Breast epithelium (tissue), 4 donors: ENCODE measurements at regions of chr3 and their contacts with region 1.

Region 1: DNA sequence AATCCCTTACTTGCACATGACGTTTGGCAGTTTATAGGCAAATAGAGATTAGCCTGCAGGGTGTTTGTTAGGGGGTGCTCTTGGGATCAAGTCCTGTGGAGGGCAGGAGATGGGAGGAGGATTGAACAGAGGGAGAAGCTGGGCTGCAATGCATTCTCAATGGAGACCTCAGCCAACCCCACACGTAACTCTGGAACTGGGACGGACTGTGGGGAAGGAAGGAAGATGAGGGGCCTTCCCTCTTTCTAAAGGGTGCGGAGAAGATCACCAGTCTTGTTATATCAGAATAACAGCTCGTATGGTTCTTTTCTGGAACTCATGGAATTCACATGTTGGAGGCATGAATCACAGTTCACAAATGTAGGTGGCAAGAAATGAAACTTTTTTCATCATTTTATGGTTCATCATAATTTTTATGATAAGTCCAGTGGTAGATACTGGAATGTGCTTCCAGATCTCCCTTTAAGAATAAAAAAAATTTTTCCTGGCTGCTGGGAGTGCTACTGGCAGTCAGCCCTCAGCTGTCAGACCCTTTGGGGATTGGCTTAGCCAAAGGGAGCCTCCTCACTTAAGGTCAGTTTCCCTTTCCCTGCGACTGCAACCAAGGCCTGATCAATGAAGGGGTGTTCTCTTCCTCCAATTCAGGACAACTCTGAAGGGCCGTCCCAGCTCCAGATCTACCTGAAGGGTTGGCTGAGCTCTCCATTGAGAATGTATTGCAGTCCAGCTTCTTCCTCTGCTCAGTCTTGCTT is 20.5 kb upstream of the LYZL4 start:
- DNase-seq: no peak
- H3K4me3 ChIP-seq: no peak overlapping the region
- H3K27ac ChIP-seq: no peak overlapping the region
- H3K4me1 ChIP-seq: no peaks in the 10 kb centered on the region
- H3K27me3 ChIP-seq: peaks cover 0 to 3% of the 10 kb centered on the region in 2 donors
- CTCF ChIP-seq: no peak
- POLR2A ChIP-seq: no peak

Region 2: DNA sequence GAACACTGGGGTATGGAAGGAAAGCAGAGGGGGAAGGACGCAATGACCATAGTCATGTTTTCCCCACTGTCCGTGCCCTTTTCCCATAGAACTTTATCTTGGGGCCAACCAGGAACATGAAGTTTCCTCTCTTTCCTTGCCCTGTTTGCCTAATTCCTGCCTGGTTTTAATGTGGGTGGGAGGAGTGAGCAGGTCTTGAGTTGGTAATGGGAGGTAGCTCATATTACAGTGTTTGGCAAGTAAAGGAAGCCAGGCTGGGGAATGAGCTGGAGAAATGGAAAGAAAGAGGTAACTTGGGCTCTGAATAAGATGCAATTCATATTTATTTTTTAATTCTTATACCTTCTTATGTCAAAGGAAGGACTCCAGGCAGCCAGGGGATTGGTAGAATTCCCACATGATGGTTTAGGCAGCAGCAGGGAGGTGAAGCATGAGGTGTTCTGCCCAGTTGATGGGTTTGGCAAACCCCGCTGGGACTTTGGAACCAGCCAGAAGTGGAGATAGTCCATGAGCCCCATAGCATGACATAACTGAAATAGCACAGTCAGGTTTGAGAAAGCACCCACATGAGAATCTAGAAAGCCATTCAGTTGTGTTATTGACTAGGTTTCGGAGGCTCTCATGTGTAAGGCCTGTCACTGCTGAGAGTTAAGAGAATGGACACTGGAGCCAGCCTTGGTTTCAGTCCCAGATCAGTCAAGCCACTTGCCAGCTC is 225.0 kb before region 1 on chr3:
- intact Hi-C with region 1: no loop called
- DNase-seq: no peak
- H3K4me3 ChIP-seq: no peak overlapping the region
- H3K27ac ChIP-seq: no peak overlapping the region
- H3K4me1 ChIP-seq: no peaks in the 10 kb centered on the region
- H3K27me3 ChIP-seq: no peaks in the 10 kb centered on the region
- CTCF ChIP-seq: no peak
- POLR2A ChIP-seq: no peak

Region 3: DNA sequence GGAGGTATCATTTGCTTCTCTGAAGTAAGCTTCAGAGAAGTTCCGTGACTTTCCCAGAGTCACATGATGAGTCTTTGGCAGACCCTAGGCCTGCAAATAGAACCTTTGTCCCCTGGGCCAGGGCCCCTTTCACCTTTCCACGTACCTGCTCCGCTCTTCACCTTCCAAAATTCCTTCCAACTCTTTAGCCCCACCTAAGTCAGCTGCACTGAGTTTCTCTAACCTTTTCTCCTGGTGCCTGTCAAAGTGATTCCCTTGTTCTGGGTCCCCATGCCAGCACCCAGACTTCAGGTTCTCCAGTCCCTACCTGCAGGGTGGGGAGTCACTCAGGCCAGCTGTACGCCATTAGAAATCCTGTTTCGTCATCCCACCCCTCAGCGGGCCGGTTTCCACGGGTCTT is 33.3 kb before region 1 on chr3:
- intact Hi-C with region 1: loop called (anchors 1 kb)
- DNase-seq: no peak
- H3K4me3 ChIP-seq: no peak overlapping the region
- H3K27ac ChIP-seq: no peak overlapping the region
- H3K4me1 ChIP-seq: no peaks in the 10 kb centered on the region
- H3K27me3 ChIP-seq: no peaks in the 10 kb centered on the region
- CTCF ChIP-seq: no peak
- POLR2A ChIP-seq: no peak

Region 4: GRCh38 chr3:42654331-42655201 is 223.6 kb after region 1 on chr3:
- intact Hi-C with region 1: no loop called
- DNase-seq: peak in 1 of 2 donors; percentile 52
- H3K4me3 ChIP-seq: peak overlapping the region; percentile 75 to 97 (median 86)
- H3K27ac ChIP-seq: peak overlapping the region; percentile 89 to 98
- H3K4me1 ChIP-seq: peaks cover 10 to 18% of the 10 kb centered on the region in 2 donors
- H3K27me3 ChIP-seq: no peaks in the 10 kb centered on the region
- CTCF ChIP-seq: no peak
- POLR2A ChIP-seq: no peak